CD4-positive, alpha-beta memory T cell (primary cell): ENCODE measurements at regions of chr9 and their contacts with region 1.

Region 1: DNA sequence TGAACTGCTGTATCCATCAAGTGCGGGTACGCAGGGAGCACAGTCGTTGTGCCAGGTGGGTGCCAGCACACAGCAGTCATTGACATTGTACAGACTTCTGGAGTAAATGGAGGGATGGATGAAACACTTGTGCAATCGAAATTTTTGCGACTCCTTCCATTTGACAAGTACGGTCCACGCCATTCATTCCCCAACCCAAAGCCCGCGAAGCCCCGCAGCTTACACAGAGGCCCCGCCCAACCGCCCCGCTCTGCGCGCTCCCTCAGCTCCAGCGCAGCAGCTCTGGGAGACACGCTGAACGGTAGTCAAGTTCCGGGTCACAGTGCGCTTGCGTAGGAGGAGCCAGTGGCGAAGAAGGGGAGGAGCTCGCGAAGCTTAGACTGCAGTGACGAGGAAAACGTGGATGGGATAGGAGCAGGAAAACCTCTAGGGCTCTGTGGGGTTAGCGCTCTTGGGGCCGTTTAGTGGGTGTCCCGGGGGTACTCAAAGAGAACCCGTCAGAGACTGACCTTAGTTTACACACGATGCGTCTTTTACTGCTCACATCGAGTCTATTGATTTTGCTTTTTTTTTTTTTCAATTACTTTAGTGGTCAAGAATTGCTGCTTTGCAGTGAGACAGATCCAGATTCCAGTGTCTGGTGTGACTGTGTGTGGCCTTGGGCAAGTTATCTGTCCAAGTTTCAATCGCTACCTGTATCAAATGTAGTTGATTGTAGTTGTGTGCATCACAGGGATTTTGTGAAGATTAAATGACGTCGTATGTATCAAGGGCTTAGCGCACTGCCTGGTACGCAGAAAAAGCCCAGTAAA is 15.3 kb upstream of the MSANTD3 start:
- DNase-seq: peak; percentile 80 to 88 (median 81)
- H3K4me3 ChIP-seq: peak overlapping the region; percentile 58 to 59
- H3K4me3 Mint-ChIP-seq: peak overlapping the region; percentile 86 to 94 (median 90)
- H3K27ac ChIP-seq: no peak overlapping the region
- H3K27ac Mint-ChIP-seq: peak overlapping the region; percentile 57 to 92 (median 85)
- H3K4me1 ChIP-seq: peaks cover 8% of the 10 kb centered on the region
- H3K4me1 Mint-ChIP-seq: peaks cover 9 to 14% (median 13%) of the 10 kb centered on the region in 4 donors
- H3K27me3 ChIP-seq: no peaks in the 10 kb centered on the region
- H3K27me3 Mint-ChIP-seq: peaks cover 5 to 20% of the 10 kb centered on the region in 2 donors

Region 2: DNA sequence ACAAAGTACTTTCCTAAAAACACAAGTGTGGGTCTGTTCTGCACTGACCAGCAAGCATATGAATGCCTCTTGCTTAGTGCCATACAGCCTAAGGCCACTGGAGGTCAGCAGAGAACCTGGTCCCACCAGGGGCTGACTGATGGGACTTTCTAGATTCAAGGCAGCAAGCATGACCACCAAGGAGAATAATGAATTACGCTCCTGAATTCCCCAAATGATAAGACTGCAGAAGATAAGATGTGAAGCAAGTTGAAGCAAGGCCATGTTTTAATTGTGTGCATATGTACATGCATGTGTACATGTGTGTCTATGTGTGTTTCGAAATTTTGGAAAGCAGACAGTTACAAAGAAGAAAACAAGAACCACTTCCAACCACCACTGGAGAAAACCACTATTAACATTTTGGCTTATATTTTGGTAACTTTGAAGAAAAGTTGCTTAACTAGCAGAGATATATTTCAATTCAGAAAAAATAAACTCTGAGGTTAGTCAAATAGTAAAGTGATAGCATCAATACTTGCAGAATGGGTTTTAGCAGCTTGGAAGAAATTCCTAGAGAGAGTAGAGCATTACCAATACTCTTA is 383.4 kb before region 1 on chr9:
- CTCF ChIA-PET with region 1: no interaction called
- POLR2A ChIA-PET with region 1: no interaction called
- intact Hi-C with region 1: no loop called
- DNase-seq: peak; percentile 47 to 67 (median 58)
- H3K4me3 ChIP-seq: no peak overlapping the region
- H3K4me3 Mint-ChIP-seq: no peak overlapping the region
- H3K27ac ChIP-seq: no peak overlapping the region
- H3K27ac Mint-ChIP-seq: peak overlapping the region in 1 of 7 donors; percentile 57
- H3K4me1 ChIP-seq: no peaks in the 10 kb centered on the region
- H3K4me1 Mint-ChIP-seq: peaks cover 5 to 11% (median 7%) of the 10 kb centered on the region in 4 donors
- H3K27me3 ChIP-seq: no peaks in the 10 kb centered on the region
- H3K27me3 Mint-ChIP-seq: no peaks in the 10 kb centered on the region

Region 3: DNA sequence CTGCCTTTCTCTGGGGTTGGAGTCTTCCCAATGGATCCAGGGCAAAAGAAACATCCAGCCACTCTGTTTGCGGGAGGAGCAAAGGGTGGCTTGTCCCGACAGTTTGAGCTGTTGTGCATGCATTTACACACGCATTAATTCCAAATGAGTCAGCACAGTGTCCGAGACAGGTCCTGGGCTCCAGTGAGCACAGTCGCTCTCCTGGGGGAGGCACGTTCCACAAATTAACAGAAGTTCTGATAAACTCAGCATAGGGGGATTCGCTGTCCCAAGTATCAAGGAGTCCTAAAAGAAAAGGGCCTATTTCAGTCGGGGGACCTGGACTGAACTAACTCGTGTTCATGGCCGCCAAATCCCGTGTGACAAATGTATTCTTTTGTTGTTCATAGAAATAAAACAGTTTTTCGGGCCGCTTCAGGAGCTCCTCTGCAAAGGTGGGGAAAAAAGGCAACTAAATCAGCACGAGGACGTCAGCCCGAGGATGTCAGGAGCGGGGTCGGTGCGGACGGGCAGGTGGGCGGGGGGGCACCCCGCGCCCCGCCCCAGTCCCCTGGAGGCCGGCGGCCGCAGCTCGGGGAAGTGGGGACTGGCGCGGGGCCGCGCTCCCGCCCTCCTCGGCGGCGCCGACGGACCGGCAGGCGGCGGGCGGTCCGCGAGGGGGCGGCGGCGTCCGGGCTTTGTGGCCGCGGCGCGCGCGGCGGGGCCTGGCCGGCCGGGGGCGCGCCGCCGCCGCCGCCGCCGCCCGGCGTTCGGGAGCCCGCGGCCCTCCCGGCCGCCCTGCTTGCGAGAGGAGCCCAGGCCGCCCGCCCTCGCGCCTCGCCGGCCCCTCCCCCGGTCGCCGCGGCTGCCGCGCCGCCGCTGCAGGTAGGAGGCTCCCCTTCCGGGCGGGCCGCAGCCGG is 15.1 kb after region 1 on chr9 and contains the start of gene MSANTD3:
- CTCF ChIA-PET with region 1: interaction called, 6 read pairs
- POLR2A ChIA-PET with region 1: interaction called, 13 read pairs
- intact Hi-C with region 1: loop called (anchors 1 kb)
- DNase-seq: peak; percentile 39 to 57 (median 48)
- H3K4me3 ChIP-seq: peak within 1 kb of the TSS; percentile 64 to 72
- H3K4me3 Mint-ChIP-seq: peak within 1 kb of the TSS; percentile 94 to 99 (median 96)
- H3K27ac ChIP-seq: peak within 1 kb of the TSS; percentile 40
- H3K27ac Mint-ChIP-seq: peak within 1 kb of the TSS; percentile 92 to 97 (median 95)
- H3K4me1 ChIP-seq: peaks cover 26% of the 10 kb centered on the region
- H3K4me1 Mint-ChIP-seq: peaks cover 27 to 50% (median 35%) of the 10 kb centered on the region in 4 donors
- H3K27me3 ChIP-seq: no peaks in the 10 kb centered on the region
- H3K27me3 Mint-ChIP-seq: peaks cover 1% of the 10 kb centered on the region in 2 donors
- total RNA-seq, gene MSANTD3: 14.4 to 14.8 TPM

Region 4: DNA sequence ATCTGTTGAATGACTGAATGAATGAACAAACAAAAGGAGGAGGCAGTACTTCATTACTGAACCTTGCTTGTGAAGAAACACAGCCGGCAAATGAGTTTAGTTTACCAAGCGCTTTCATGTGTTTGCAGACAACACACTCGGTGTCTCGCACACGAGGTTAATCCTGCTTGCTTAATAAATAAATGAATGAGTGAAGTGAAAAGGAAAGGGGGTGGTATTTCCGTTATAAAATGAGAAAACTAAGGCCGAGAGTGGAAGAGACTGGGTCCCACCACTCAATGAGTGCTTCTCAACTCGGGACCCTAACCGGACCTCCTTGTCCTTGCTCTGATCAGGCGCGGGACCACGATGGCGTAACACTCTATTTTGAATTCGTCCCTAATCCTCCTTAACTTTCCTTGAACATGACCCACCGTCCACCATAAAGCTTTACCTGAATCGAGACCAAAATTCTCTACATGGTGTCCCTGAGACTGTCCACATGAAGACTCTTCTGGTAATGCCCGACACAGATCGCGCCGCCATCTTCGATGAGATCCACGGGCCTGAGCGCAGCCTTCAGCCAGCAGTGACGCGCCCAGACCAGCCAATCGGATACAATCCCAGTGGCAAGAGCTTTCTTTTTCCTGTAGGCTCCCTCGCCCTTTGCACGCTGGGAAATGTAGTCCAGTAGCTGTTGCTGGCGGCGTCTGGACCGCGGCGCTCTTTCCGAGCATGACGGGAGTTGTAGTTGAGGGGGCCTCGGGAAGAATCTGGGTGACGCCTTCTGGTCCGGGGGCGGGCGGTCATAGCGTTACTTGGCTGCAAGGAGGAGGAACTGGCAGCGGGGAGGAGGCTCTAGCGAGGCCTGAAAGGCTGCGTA is 986.6 kb after region 1 on chr9 and contains the starts of genes MRPL50 and ZNF189:
- CTCF ChIA-PET with region 1: no interaction called
- POLR2A ChIA-PET with region 1: no interaction called
- intact Hi-C with region 1: loop called (anchors 2 kb)
- DNase-seq: peak; percentile 95 to 100 (median 97)
- H3K4me3 ChIP-seq: peak within 1 kb of the TSS; percentile 75 to 86
- H3K4me3 Mint-ChIP-seq: peak within 1 kb of the TSS; percentile 98 to 100 (median 99)
- H3K27ac ChIP-seq: peak within 1 kb of the TSS; percentile 93
- H3K27ac Mint-ChIP-seq: peak within 1 kb of the TSS; percentile 98 to 100 (median 99)
- H3K4me1 ChIP-seq: peaks cover 64% of the 10 kb centered on the region
- H3K4me1 Mint-ChIP-seq: peaks cover 61 to 87% (median 78%) of the 10 kb centered on the region in 4 donors
- H3K27me3 ChIP-seq: no peaks in the 10 kb centered on the region
- H3K27me3 Mint-ChIP-seq: no peaks in the 10 kb centered on the region
- total RNA-seq, gene MRPL50: 20.9 to 23.0 TPM
- total RNA-seq, gene ZNF189: 22.1 to 23.2 TPM